Activated CD4-positive, alpha-beta memory T cell treated with anti-CD3 and anti-CD28 coated beads for 36 hours (primary cell): ENCODE measurements at regions of chr10 and their contacts with region 1.

Region 1: GRCh38 chr10:22630234-22631174 is 83.9 kb downstream of the PIP4K2A start:
- DNase-seq: peak; percentile 64
- H3K4me3 Mint-ChIP-seq: peak overlapping the region; percentile 72
- H3K27ac Mint-ChIP-seq: peak overlapping the region; percentile 98
- H3K4me1 Mint-ChIP-seq: peaks cover 92% of the 10 kb centered on the region
- H3K27me3 Mint-ChIP-seq: no peaks in the 10 kb centered on the region

Region 2: DNA sequence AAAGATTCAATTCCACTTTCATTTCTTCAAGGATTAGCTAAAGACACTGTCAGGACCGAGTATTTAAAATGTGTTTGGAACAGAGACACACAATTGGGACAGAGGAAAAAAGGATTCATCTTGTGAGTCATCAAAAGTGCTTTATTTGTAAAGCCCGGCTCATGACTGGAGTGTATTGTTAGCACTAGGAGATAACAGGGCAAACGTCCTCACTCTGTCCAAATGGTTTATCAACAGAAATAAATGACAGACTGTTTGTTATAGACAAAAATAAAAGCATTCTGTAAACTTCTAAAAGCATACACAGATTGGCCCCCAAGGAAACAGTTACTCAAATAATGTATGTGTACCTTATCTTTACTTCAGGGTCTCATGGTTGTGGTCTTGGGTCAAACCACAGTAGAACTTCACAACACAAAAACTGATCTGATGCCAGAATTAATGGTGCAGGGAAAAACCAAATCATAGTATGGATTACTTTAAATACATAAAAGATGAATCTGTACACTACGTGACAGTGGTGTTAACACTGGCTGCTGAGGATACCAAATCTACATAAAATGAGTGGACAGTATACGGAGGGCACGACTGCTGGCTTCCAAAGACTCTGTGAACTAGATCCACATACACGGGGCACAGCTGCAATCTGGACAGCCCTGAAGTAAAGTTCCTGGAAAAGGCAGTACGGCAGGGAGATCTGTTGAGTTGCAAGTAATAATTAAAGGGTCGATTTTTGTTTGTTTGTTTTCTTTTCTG is 95.5 kb before region 1 on chr10:
- CTCF ChIA-PET with region 1: no interaction called
- POLR2A ChIA-PET with region 1: no interaction called
- intact Hi-C with region 1: no loop called
- DNase-seq: no peak
- H3K4me3 Mint-ChIP-seq: no peak overlapping the region
- H3K27ac Mint-ChIP-seq: no peak overlapping the region
- H3K4me1 Mint-ChIP-seq: no peaks in the 10 kb centered on the region
- H3K27me3 Mint-ChIP-seq: no peaks in the 10 kb centered on the region

Region 3: DNA sequence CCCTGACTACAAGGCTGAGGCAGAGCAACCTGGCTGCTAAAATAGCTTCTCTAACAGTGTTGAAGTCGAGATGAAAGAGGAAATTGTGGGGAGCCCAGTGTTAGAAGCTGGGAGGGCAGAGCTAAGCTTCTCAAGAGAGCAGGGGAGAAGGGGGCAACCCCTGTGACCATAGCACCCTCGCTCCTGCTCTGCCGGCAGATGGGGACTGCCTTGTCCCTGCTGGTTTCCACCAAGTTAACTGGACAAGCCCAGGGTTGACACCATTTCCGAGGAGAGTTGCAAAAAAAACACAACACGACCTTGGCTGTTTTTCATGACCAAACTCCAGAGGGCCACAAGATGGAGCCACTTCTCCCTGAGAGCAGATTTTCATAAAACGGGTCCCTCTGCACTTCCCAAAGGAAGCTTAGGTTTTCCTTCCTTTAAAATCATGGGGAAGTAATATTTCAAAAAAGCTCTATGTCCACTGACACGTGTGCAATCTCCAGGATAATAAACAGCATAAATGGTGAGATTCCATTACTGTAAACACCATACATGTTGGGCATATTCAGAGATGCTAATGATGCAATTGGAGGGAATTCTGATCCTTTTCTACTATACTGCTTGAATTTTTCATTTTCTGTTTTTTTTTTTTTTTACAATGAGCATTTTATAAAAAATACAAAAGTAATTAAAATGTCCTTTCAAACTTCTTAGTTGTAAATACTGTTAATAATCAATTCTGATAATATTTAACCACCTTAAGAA is 56.5 kb before region 1 on chr10:
- CTCF ChIA-PET with region 1: interaction called, 7 read pairs
- POLR2A ChIA-PET with region 1: no interaction called
- intact Hi-C with region 1: loop called (anchors 1 kb)
- DNase-seq: peak; percentile 40
- H3K4me3 Mint-ChIP-seq: no peak overlapping the region
- H3K27ac Mint-ChIP-seq: peak overlapping the region; percentile 54
- H3K4me1 Mint-ChIP-seq: peaks cover 56% of the 10 kb centered on the region
- H3K27me3 Mint-ChIP-seq: no peaks in the 10 kb centered on the region

Region 4: GRCh38 chr10:22615819-22616499 is 14.5 kb before region 1 on chr10:
- CTCF ChIA-PET with region 1: interaction called, 4 read pairs
- POLR2A ChIA-PET with region 1: interaction called, 21 read pairs
- intact Hi-C with region 1: loop called (anchors 1 kb)
- DNase-seq: peak; percentile 57
- H3K4me3 Mint-ChIP-seq: peak overlapping the region; percentile 79
- H3K27ac Mint-ChIP-seq: peak overlapping the region; percentile 86
- H3K4me1 Mint-ChIP-seq: peaks cover 97% of the 10 kb centered on the region
- H3K27me3 Mint-ChIP-seq: no peaks in the 10 kb centered on the region

Region 5: DNA sequence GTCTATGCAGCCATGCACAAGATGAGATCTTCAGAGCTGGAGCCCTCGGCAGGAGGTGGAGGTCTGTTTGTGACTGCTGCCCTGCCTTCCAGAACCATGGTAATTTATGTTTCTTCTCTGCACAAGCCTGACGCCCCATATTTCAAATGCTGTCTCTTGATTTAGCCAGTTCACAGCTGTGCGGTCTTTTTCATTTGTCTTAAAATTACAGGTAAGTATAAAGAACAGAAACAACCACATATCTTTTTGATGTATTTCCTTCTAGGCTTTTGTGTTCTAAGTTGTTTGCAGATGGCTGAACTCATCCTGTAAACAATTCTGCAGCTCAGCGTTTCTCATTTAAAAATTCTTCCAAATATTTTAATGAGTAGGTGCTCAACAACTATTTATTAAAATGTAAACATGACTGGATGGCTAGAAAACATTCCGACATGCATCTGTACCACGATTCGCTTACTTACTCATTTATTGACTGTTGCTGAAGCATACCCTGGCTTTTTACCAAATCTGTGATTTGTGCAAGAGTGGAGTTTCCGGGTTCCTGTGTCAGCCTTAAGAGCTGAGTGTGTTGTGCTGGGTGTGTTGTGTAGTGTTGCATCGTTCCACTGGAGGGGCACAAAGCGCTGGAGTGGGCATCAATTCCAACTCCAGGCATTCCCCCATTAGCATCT is 24.9 kb after region 1 on chr10:
- CTCF ChIA-PET with region 1: interaction called, 22 read pairs
- POLR2A ChIA-PET with region 1: interaction called, 43 read pairs
- intact Hi-C with region 1: loop called (anchors 1 kb)
- DNase-seq: peak; percentile 63
- H3K4me3 Mint-ChIP-seq: peak overlapping the region; percentile 60
- H3K27ac Mint-ChIP-seq: peak overlapping the region; percentile 84
- H3K4me1 Mint-ChIP-seq: peaks cover 95% of the 10 kb centered on the region
- H3K27me3 Mint-ChIP-seq: no peaks in the 10 kb centered on the region

Region 6: DNA sequence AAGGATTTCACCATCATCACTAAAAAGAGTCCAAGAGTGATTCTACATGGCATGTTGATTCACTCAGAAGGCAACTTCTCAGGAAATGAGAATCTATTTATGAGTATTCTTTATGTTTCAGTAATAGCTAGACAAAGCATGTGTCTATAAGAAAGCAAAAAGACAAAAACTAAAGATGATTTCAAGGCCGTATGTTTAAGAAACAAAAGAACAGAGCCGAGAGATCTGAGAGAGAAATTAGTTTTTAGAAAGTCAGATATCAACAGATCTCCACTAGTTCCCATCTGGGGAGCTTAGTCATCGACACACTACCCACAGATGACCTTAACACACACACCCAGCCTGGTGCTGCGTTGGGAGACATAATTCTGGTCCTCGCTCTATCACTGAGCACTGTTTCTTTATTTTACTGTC is 62.9 kb after region 1 on chr10:
- CTCF ChIA-PET with region 1: interaction called, 4 read pairs
- POLR2A ChIA-PET with region 1: interaction called, 9 read pairs
- intact Hi-C with region 1: loop called (anchors 1 kb)
- DNase-seq: peak; percentile 62
- H3K4me3 Mint-ChIP-seq: peak overlapping the region; percentile 55
- H3K27ac Mint-ChIP-seq: peak overlapping the region; percentile 95
- H3K4me1 Mint-ChIP-seq: peaks cover 93% of the 10 kb centered on the region
- H3K27me3 Mint-ChIP-seq: no peaks in the 10 kb centered on the region